Heart right ventricle (tissue), 16 donors: ENCODE measurements at regions of chr22 and their contacts with region 1.

Region 1: GRCh38 chr22:34490886-34491285 is 570.6 kb upstream of the LARGE1 start:
- DNase-seq: no peak
- ATAC-seq: no peak
- H3K4me3 ChIP-seq: no peak overlapping the region
- H3K27ac ChIP-seq: no peak overlapping the region
- H3K4me1 ChIP-seq: no peaks in the 10 kb centered on the region
- H3K27me3 ChIP-seq: no peaks in the 10 kb centered on the region
- CTCF ChIP-seq: no peak

Region 2: GRCh38 chr22:34093646-34094045 is 397.2 kb before region 1 on chr22:
- intact Hi-C with region 1: no loop called
- DNase-seq: no peak
- ATAC-seq: no peak
- H3K4me3 ChIP-seq: no peak overlapping the region
- H3K27ac ChIP-seq: no peak overlapping the region
- H3K4me1 ChIP-seq: no peaks in the 10 kb centered on the region
- H3K27me3 ChIP-seq: peaks cover 0 to 9% (median 0%) of the 10 kb centered on the region in 7 donors
- CTCF ChIP-seq: no peak

Region 3: GRCh38 chr22:34475886-34476285 is 15.0 kb before region 1 on chr22:
- intact Hi-C with region 1: loop called in 1 of 10 experiments (anchors 2 kb)
- DNase-seq: no peak
- ATAC-seq: no peak
- H3K4me3 ChIP-seq: no peak overlapping the region
- H3K27ac ChIP-seq: no peak overlapping the region
- H3K4me1 ChIP-seq: no peaks in the 10 kb centered on the region
- H3K27me3 ChIP-seq: peaks cover 0 to 43% (median 9%) of the 10 kb centered on the region in 7 donors
- CTCF ChIP-seq: no peak